ENCODE measurements at regions of chr16 and their contacts with region 1.

Region 1: GRCh38 chr16:56700195-56700594 is 17.9 kb downstream of the MT1X start:
- DNase-seq: no peak
- H3K4me3 ChIP-seq: no peak overlapping the region
- H3K27ac ChIP-seq: no peak overlapping the region
- H3K4me1 ChIP-seq: peaks cover 8% of the 10 kb centered on the region
- H3K27me3 ChIP-seq: no peaks in the 10 kb centered on the region
- CTCF ChIP-seq: no peak

Region 2: DNA sequence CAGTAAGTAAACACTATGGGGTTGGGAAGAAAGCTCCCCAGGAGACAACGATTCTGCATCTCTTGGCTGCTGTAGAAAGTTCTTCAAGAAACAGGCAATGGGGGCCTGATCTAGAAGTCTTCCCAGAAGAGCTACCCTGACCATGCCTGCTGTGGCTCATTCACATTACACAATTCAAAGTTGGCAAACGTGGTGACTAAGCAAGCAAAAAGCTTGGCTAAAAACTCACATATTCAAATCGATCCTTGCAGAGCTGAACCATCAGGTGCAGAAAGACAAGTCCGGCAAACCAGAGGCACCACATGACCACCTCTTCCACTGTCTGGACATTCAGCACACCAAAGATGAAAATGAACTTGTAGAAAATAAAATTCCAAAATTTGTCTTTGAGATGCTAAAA is 291.0 kb before region 1 on chr16:
- intact Hi-C with region 1: no loop called
- DNase-seq: no peak
- H3K4me3 ChIP-seq: no peak overlapping the region
- H3K27ac ChIP-seq: no peak overlapping the region
- H3K4me1 ChIP-seq: peaks cover 3% of the 10 kb centered on the region
- H3K27me3 ChIP-seq: no peaks in the 10 kb centered on the region
- CTCF ChIP-seq: no peak

Region 3: DNA sequence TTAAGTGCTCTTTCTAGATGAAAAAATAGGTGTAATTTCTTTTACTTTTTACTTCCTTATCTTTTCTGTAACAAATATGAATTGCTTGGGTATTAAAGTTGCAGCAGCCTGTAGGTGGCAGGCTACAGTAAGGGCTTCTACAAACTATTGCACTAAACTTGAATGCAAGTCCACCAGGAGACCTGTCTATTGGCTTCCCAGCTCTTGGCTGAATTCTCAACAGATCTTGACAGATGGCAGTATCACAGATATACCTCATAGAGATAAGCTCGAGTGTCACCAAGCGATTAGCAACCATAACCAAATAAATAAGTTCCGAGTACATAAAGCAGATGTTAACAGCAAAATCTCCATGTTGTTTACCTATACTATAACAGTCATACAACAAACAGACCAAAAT is 186.2 kb before region 1 on chr16:
- intact Hi-C with region 1: loop called (anchors 5 kb)
- DNase-seq: no peak
- H3K4me3 ChIP-seq: no peak overlapping the region
- H3K27ac ChIP-seq: no peak overlapping the region
- H3K4me1 ChIP-seq: peaks cover 49% of the 10 kb centered on the region
- H3K27me3 ChIP-seq: no peaks in the 10 kb centered on the region
- CTCF ChIP-seq: peak; percentile 78

Region 4: GRCh38 chr16:56532714-56533113 is 167.5 kb before region 1 on chr16:
- intact Hi-C with region 1: no loop called
- DNase-seq: no peak
- H3K4me3 ChIP-seq: no peak overlapping the region
- H3K27ac ChIP-seq: no peak overlapping the region
- H3K4me1 ChIP-seq: no peaks in the 10 kb centered on the region
- H3K27me3 ChIP-seq: peaks cover 40% of the 10 kb centered on the region
- CTCF ChIP-seq: no peak

Region 5: DNA sequence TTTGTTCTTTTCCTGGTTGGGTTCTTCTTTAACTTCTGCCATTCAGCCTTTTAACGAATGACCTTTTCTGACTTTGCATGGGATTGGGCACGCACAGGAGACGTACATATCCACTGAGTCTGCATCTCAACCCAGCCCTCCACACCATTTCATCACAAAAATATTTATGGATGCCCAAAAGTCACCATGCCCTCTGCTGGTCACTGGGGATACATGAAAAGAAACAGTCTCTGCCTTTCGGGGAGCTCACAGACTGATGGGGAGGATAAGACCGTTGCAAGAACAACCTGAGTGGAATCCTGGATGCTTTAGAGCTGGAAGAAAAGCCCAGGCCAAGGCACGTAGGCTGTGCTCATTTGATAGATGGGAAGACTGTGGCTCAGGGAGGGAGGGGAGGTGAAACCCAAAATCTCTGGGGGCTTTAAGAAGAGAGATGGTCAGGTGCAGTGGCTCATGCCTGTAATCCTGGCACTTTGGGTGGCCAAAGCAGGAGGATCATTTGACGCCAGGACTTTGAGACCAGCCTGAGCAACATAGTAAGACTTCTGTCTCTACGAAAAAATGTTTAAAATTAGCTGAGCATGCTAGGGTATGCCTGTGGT is 99.7 kb before region 1 on chr16:
- intact Hi-C with region 1: loop called (anchors 5 kb)
- DNase-seq: no peak
- H3K4me3 ChIP-seq: no peak overlapping the region
- H3K27ac ChIP-seq: no peak overlapping the region
- H3K4me1 ChIP-seq: no peaks in the 10 kb centered on the region
- H3K27me3 ChIP-seq: no peaks in the 10 kb centered on the region
- CTCF ChIP-seq: peak; percentile 67